Left ventricle myocardium superior (tissue), 1 donor: ENCODE measurements at regions of chr7 and their contacts with region 1.

Region 1: GRCh38 chr7:8226501-8226900 is 35.5 kb downstream of the ICA1 start:
- DNase-seq: no peak
- ATAC-seq: peak; percentile 92

Region 2: GRCh38 chr7:7595451-7595850 is 631.0 kb before region 1 on chr7:
- intact Hi-C with region 1: loop called (anchors 10 kb)
- DNase-seq: no peak
- ATAC-seq: no peak

Region 3: DNA sequence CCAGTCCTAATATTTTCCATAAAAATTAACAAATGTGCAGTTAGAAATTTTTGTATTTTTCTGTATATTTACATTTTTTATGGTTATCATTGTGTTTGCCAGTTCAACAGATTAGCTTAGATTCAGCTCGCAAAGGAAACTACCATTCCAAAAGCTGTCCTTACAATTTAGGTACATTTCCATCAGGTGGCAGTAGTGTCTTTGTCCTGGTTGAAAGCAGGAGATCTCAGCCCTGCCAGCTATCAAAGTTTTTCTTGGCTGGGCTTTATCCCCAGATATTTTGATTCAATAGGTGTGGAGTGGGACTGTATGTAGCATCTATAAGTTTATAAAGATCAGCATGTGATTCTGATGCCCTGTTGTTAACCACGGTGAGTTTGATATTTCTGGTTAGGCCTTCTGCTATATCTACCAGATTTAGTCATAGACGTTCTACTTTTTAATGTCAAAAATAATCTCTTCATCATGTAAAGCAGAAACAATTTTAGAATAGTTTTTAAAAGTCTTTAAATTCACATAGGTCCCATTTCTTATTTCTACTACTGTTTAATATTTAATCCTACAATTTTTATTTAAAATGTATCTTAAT is 51.0 kb after region 1 on chr7:
- intact Hi-C with region 1: no loop called
- DNase-seq: no peak
- ATAC-seq: no peak